MCF 10A (cell line): ENCODE measurements at regions of chr11 and their contacts with region 1.

Region 1: GRCh38 chr11:111926505-111927391 is 8.0 kb downstream of the C11orf52 start:
- DNase-seq: peak; percentile 95
- H3K4me3 Mint-ChIP-seq: peak overlapping the region; percentile 73
- H3K27ac Mint-ChIP-seq: peak overlapping the region; percentile 66
- H3K4me1 Mint-ChIP-seq: peaks cover 22% of the 10 kb centered on the region
- H3K27me3 Mint-ChIP-seq: no peaks in the 10 kb centered on the region
- CTCF ChIP-seq: no peak

Region 2: GRCh38 chr11:111819161-111819828 is 107.5 kb before region 1 on chr11:
- CTCF ChIA-PET with region 1: no interaction called
- POLR2A ChIA-PET with region 1: no interaction called
- intact Hi-C with region 1: no loop called
- DNase-seq: no peak
- H3K4me3 Mint-ChIP-seq: no peak overlapping the region
- H3K27ac Mint-ChIP-seq: no peak overlapping the region
- H3K4me1 Mint-ChIP-seq: no peaks in the 10 kb centered on the region
- H3K27me3 Mint-ChIP-seq: no peaks in the 10 kb centered on the region
- CTCF ChIP-seq: no peak

Region 3: GRCh38 chr11:111878849-111879636 is 47.7 kb before region 1 on chr11 and contains the starts of genes CFAP68 and FDXACB1:
- CTCF ChIA-PET with region 1: interaction called, 10 read pairs
- POLR2A ChIA-PET with region 1: interaction called, 20 read pairs
- intact Hi-C with region 1: loop called (anchors 1 kb)
- DNase-seq: peak; percentile 98
- H3K4me3 Mint-ChIP-seq: peak within 1 kb of the TSS; percentile 95
- H3K27ac Mint-ChIP-seq: peak within 1 kb of the TSS; percentile 97
- H3K4me1 Mint-ChIP-seq: peaks cover 6% of the 10 kb centered on the region
- H3K27me3 Mint-ChIP-seq: no peaks in the 10 kb centered on the region
- CTCF ChIP-seq: peak; percentile 94
- total RNA-seq, gene CFAP68: 33.6 and 38.3 TPM in 2 replicates
- total RNA-seq, gene FDXACB1: 0.79 and 1.0 TPM in 2 replicates

Region 4: DNA sequence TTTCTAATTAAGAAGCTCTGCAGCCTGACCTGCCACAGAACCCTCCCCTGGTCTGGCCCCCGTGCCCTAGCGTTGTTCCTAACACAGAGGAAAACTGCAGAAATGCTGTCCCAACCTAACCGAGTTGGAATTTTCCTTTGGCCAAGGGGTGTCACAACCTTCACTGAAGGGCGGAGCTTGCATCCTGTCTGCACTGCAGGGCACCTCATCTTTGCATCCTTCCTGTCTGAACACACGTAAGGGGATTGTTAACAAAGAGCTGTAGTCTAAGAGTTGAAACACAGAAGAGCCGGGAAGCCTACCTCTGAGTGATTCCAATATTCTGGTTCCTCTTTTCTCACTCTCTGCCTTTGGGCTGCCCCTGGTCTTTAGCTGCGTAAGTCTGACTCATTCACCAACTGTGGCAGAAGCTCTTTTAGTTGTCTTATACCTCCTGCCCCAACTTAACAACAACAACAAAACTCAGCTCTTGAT is 12.0 kb after region 1 on chr11:
- CTCF ChIA-PET with region 1: interaction called, 33 read pairs
- POLR2A ChIA-PET with region 1: interaction called, 28 read pairs
- intact Hi-C with region 1: no loop called
- DNase-seq: peak; percentile 67
- H3K4me3 Mint-ChIP-seq: peak overlapping the region; percentile 71
- H3K27ac Mint-ChIP-seq: peak overlapping the region; percentile 8
- H3K4me1 Mint-ChIP-seq: peaks cover 60% of the 10 kb centered on the region
- H3K27me3 Mint-ChIP-seq: no peaks in the 10 kb centered on the region
- CTCF ChIP-seq: no peak

Region 5: GRCh38 chr11:111960916-111961315 is 34.2 kb after region 1 on chr11:
- CTCF ChIA-PET with region 1: interaction called, 16 read pairs
- POLR2A ChIA-PET with region 1: interaction called, 12 read pairs
- intact Hi-C with region 1: no loop called
- DNase-seq: peak; percentile 89
- H3K4me3 Mint-ChIP-seq: peak overlapping the region; percentile 22
- H3K27ac Mint-ChIP-seq: peak overlapping the region; percentile 74
- H3K4me1 Mint-ChIP-seq: peaks cover 20% of the 10 kb centered on the region
- H3K27me3 Mint-ChIP-seq: no peaks in the 10 kb centered on the region
- CTCF ChIP-seq: no peak

Region 6: DNA sequence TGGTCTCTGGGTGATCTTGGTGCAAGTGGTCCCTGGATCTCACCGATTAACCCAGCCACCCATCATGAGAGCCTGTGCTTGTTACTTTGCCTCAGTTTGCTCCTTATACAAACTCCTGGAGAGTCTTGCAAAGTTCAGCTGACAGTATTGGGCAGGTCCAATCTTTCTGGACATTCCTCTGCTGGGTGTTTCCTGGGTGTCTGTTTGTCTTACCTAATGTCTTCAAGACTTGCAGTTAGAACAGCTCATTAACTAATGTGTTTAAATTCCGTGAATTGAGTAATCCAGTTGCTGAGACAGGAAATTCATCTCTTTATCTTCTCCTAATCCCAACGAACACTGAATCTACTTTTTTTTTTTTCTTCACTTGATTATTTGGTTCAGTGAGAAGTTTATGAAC is 269.2 kb after region 1 on chr11:
- CTCF ChIA-PET with region 1: no interaction called
- POLR2A ChIA-PET with region 1: no interaction called
- intact Hi-C with region 1: no loop called
- DNase-seq: peak; percentile 80
- H3K4me3 Mint-ChIP-seq: peak overlapping the region; percentile 69
- H3K27ac Mint-ChIP-seq: peak overlapping the region; percentile 90
- H3K4me1 Mint-ChIP-seq: peaks cover 16% of the 10 kb centered on the region
- H3K27me3 Mint-ChIP-seq: no peaks in the 10 kb centered on the region
- CTCF ChIP-seq: no peak

Region 7: DNA sequence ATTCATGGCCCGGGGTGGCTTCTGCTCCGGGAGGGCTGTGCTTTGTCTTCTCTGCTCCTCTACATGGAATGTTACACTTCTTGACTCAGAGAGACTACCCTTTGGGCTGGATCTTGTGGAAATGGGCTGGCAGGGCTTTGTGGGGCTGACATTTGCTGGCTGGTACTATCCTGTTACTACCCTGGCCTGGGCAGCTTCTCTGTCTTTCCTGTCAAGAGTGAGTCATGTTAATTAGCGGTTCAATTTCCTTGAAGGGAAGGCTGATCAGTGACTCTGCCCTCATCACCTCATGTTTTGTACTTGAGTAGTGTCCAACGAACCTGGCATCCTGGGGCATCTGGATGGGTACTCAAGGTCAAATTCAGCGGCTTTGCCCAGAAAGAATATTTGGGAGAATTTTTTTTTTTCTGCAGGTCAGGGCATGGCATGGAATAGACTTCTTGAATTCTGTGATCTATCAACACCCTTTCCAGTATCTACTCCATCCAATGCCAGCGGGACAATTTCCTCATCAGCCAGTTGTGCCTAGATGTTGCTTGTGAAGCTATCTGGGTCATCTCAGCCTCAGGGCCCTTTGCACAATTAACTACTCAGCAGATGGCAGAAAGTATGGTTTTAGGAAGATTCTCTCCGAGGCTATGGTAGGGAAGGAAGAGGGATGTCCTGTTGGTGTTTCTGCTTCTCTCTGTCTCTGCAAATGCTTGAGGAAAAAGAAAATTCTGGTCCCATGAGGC is 474.5 kb after region 1 on chr11:
- CTCF ChIA-PET with region 1: no interaction called
- POLR2A ChIA-PET with region 1: no interaction called
- intact Hi-C with region 1: no loop called
- DNase-seq: peak; percentile 59
- H3K4me3 Mint-ChIP-seq: no peak overlapping the region
- H3K27ac Mint-ChIP-seq: no peak overlapping the region
- H3K4me1 Mint-ChIP-seq: no peaks in the 10 kb centered on the region
- H3K27me3 Mint-ChIP-seq: peaks cover 15% of the 10 kb centered on the region
- CTCF ChIP-seq: no peak